Heart left ventricle (tissue), 16 donors: ENCODE measurements at regions of chr3 and their contacts with region 1.

Region 1: GRCh38 chr3:55485211-55485791 is 1.8 kb downstream of the WNT5A start:
- DNase-seq: peak; percentile 69 to 87 (median 75)
- ATAC-seq: peak; percentile 64 to 83 (median 83)
- H3K4me3 ChIP-seq: peak overlapping the region; percentile 37 to 92 (median 66)
- H3K27ac ChIP-seq: peak overlapping the region in 10 of 12 donors; percentile 2 to 73 (median 61)
- H3K4me1 ChIP-seq: peaks cover 0 to 71% (median 13%) of the 10 kb centered on the region in 12 donors
- H3K27me3 ChIP-seq: peaks cover 4 to 90% (median 12%) of the 10 kb centered on the region in 9 donors
- CTCF ChIP-seq: peak; percentile 51 to 86 (median 72)
- POLR2A ChIP-seq: no peak

Region 2: DNA sequence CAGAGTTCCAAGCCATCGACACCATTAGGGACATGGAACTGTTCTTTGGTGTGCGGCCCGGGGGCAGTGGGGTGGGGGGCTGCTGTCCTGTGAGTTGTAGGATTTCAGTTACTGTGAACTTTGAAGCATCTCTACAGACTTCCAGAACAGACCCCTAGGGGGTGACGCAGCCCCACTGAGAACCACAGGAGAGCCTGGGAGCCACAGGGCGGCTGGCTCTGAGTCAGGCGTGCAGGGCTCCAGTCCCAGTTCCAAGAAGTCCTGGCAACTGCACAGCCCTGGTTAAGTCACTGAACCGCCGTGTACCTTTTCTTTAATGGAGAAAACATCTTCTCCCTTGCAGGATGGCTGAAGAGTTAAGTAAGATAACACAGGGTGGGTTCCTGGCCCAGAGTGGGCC is 533.9 kb before region 1 on chr3:
- intact Hi-C with region 1: loop called in 1 of 10 experiments (anchors 10 kb)
- DNase-seq: peak; percentile 70 to 87 (median 84)
- ATAC-seq: peak; percentile 93 to 100 (median 98)
- H3K4me3 ChIP-seq: no peak overlapping the region
- H3K27ac ChIP-seq: no peak overlapping the region
- H3K4me1 ChIP-seq: peaks cover 0 to 16% (median 2%) of the 10 kb centered on the region in 12 donors
- H3K27me3 ChIP-seq: no peaks in the 10 kb centered on the region
- CTCF ChIP-seq: peak; percentile 47 to 71 (median 60)
- POLR2A ChIP-seq: no peak

Region 3: DNA sequence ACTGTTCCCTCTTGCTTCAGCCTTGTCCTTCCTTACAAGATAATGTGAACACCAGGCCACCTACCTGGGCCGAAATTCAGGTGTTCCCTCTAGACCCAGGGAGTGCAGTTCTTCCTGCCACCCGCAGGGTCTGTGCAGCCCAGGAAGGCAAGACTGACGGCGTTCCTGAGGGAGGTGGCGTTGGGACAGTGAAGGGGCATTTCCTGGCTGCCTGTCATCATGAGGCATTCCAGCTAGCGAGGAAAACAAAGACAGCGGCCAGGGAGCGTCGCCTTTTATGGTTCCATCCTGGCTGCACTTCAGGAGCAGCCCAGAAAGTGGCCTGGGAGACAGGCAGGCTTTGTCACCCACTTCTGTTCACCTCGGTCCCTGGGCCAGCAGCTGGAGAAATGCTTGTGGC is 86.6 kb after region 1 on chr3:
- intact Hi-C with region 1: loop called in 1 of 10 experiments (anchors 5 kb)
- DNase-seq: peak; percentile 66 to 89 (median 77)
- ATAC-seq: peak; percentile 94 to 98 (median 97)
- H3K4me3 ChIP-seq: no peak overlapping the region
- H3K27ac ChIP-seq: peak overlapping the region in 7 of 12 donors; percentile 22 to 70 (median 56)
- H3K4me1 ChIP-seq: peaks cover 0 to 19% (median 2%) of the 10 kb centered on the region in 12 donors
- H3K27me3 ChIP-seq: no peaks in the 10 kb centered on the region
- CTCF ChIP-seq: peak in 11 of 12 donors; percentile 11 to 61 (median 45)
- POLR2A ChIP-seq: no peak

Region 4: GRCh38 chr3:55746808-55747413 is 261.6 kb after region 1 on chr3:
- intact Hi-C with region 1: loop called in 7 of 10 experiments (anchors 5 to 10 kb)
- DNase-seq: no peak
- ATAC-seq: no peak
- H3K4me3 ChIP-seq: no peak overlapping the region
- H3K27ac ChIP-seq: no peak overlapping the region
- H3K4me1 ChIP-seq: no peaks in the 10 kb centered on the region
- H3K27me3 ChIP-seq: peaks cover 0 to 11% (median 0%) of the 10 kb centered on the region in 9 donors
- CTCF ChIP-seq: peak; percentile 14 to 50 (median 34)
- POLR2A ChIP-seq: no peak

Region 5: DNA sequence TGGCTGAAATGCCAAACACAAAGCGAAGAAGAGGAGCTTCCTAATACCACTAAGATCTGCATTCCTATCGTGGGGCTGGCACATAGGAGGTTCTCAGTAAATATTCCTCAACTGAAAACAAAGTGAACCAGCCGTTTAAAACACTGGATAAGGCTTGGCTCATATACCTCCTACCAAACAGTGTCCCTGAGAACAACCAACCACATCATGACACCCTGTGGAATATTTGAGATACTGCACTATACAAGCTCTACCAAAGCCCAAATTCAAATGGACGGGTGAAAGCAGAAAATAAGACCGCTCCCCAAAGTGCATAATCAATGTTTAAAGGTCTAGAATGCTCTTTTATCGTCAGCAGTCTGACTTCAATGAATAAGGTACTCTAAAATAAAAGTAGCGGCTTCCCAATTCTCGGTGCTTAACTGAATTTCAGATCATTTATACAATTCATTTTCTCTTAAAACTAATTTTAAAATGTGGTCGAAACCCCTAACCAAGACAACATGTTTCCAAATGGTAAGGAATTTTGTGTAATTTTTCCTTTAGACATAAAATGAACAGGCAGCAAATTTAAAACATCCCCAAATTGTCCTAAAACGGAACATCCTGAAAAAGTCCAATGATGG is 557.1 kb after region 1 on chr3:
- intact Hi-C with region 1: loop called in 9 of 10 experiments (anchors 2 to 10 kb)
- DNase-seq: no peak
- ATAC-seq: peak; percentile 51 to 80 (median 74)
- H3K4me3 ChIP-seq: no peak overlapping the region
- H3K27ac ChIP-seq: no peak overlapping the region
- H3K4me1 ChIP-seq: no peaks in the 10 kb centered on the region
- H3K27me3 ChIP-seq: peaks cover 0 to 31% (median 0%) of the 10 kb centered on the region in 9 donors
- CTCF ChIP-seq: peak in 11 of 12 donors; percentile 34 to 58 (median 52)
- POLR2A ChIP-seq: no peak